ENCODE measurements at regions of chr15 and their contacts with region 1.

Region 1: GRCh38 chr15:90031231-90031791 is 30.2 kb downstream of the ZNF710 start:
- DNase-seq: no peak
- H3K4me3 Mint-ChIP-seq: peak overlapping the region; percentile 30
- H3K27ac Mint-ChIP-seq: peak overlapping the region; percentile 44
- H3K4me1 Mint-ChIP-seq: peaks cover 56% of the 10 kb centered on the region
- H3K27me3 Mint-ChIP-seq: no peaks in the 10 kb centered on the region

Region 2: DNA sequence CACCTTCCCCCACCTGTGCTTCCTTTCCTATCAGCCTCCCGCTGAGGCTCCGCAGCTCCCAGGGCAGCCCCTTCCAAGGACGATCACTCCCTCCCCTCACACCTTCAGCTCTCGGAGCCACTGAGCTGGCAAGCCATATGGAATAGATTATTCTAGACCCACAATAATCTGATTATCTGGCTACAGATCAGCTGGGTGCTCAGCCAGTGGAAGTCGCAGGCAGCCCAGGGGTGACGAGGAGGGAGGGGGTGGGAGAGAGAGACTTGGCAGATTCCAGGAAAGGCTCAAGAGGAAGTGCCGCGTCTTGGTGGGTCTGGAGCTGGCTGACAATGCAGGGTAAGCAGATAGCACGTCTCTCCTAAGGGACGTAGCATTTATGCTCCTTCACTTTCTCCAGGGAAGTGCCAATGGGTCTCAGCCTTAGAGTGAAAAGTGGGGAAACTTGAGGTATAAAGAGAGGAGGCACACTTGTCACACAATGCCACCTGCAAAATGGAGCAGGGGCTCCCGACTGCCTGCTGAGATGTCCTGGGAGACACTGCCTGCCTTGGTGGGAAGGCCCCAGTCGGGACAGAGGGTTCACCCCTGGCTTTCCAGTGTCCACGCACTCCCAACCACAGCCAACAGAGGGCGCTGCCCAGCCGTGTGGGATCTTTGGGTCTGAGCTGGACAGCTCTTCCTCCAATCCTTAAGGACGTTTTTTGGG is 270.9 kb before region 1 on chr15:
- intact Hi-C with region 1: no loop called
- DNase-seq: peak; percentile 53
- H3K4me3 Mint-ChIP-seq: no peak overlapping the region
- H3K27ac Mint-ChIP-seq: no peak overlapping the region
- H3K4me1 Mint-ChIP-seq: no peaks in the 10 kb centered on the region
- H3K27me3 Mint-ChIP-seq: peaks cover 13% of the 10 kb centered on the region

Region 3: GRCh38 chr15:90013503-90013937 is 17.8 kb before region 1 on chr15:
- intact Hi-C with region 1: loop called (anchors 2 kb)
- DNase-seq: peak; percentile 36
- H3K4me3 Mint-ChIP-seq: peak overlapping the region; percentile 27
- H3K27ac Mint-ChIP-seq: peak overlapping the region; percentile 61
- H3K4me1 Mint-ChIP-seq: peaks cover 50% of the 10 kb centered on the region
- H3K27me3 Mint-ChIP-seq: no peaks in the 10 kb centered on the region

Measured in activated T-helper 1 cell treated with anti-CD3 and anti-CD28 coated beads, Interleukin-12 subunit alpha, Interleukin-12 subunit beta, Interleukin-2, Interleukin-4 antibody, amounts not matched to agents 30 ng/mL and 10 ng/mL and 1 ng/mL, durations not matched to agents 14 hours and 24 hours and 36 hours (primary cell).